Activated CD8-positive, alpha-beta T cell treated with anti-CD3 and anti-CD28 coated beads for 36 hours (primary cell): ENCODE measurements at regions of chr20 and their contacts with region 1.

Region 1: GRCh38 chr20:45971675-45972499 is at the start of gene ZNF335:
- DNase-seq: peak; percentile 95
- ATAC-seq: peak; percentile 86
- H3K4me3 Mint-ChIP-seq: peak within 1 kb of the TSS; percentile 84
- H3K27ac Mint-ChIP-seq: peak within 1 kb of the TSS; percentile 100
- H3K4me1 Mint-ChIP-seq: peaks cover 16% of the 10 kb centered on the region
- H3K27me3 Mint-ChIP-seq: no peaks in the 10 kb centered on the region
- CTCF ChIP-seq: no peak
- total RNA-seq, gene ZNF335: 27.0 to 28.8 TPM

Region 2: GRCh38 chr20:45823949-45824835 is 147.7 kb before region 1 on chr20:
- CTCF ChIA-PET with region 1: interaction called, 12 read pairs
- POLR2A ChIA-PET with region 1: interaction called, 5 read pairs
- intact Hi-C with region 1: no loop called
- DNase-seq: peak; percentile 66
- ATAC-seq: peak; percentile 89
- H3K4me3 Mint-ChIP-seq: peak overlapping the region; percentile 47
- H3K27ac Mint-ChIP-seq: peak overlapping the region; percentile 62
- H3K4me1 Mint-ChIP-seq: peaks cover 12% of the 10 kb centered on the region
- H3K27me3 Mint-ChIP-seq: peaks cover 27% of the 10 kb centered on the region
- CTCF ChIP-seq: peak; percentile 36

Region 3: GRCh38 chr20:45890985-45891983 is 80.6 kb before region 1 on chr20 and contains the starts of genes CTSA and NEURL2:
- CTCF ChIA-PET with region 1: interaction called, 15 read pairs
- POLR2A ChIA-PET with region 1: interaction called, 31 read pairs
- intact Hi-C with region 1: no loop called
- DNase-seq: peak; percentile 95
- ATAC-seq: peak; percentile 70
- H3K4me3 Mint-ChIP-seq: peak within 1 kb of the TSS; percentile 88
- H3K27ac Mint-ChIP-seq: peak within 1 kb of the TSS; percentile 89
- H3K4me1 Mint-ChIP-seq: peaks cover 33% of the 10 kb centered on the region
- H3K27me3 Mint-ChIP-seq: no peaks in the 10 kb centered on the region
- CTCF ChIP-seq: no peak
- total RNA-seq, gene CTSA: 34.5 to 40.2 TPM
- total RNA-seq, gene NEURL2: 2.4 to 2.9 TPM

Region 4: GRCh38 chr20:45946149-45946970 is 25.5 kb before region 1 on chr20:
- CTCF ChIA-PET with region 1: interaction called, 74 read pairs
- POLR2A ChIA-PET with region 1: interaction called, 12 read pairs
- intact Hi-C with region 1: no loop called
- DNase-seq: peak; percentile 60
- ATAC-seq: peak; percentile 52
- H3K4me3 Mint-ChIP-seq: no peak overlapping the region
- H3K27ac Mint-ChIP-seq: peak overlapping the region; percentile 65
- H3K4me1 Mint-ChIP-seq: peaks cover 13% of the 10 kb centered on the region
- H3K27me3 Mint-ChIP-seq: no peaks in the 10 kb centered on the region
- CTCF ChIP-seq: no peak

Region 5: DNA sequence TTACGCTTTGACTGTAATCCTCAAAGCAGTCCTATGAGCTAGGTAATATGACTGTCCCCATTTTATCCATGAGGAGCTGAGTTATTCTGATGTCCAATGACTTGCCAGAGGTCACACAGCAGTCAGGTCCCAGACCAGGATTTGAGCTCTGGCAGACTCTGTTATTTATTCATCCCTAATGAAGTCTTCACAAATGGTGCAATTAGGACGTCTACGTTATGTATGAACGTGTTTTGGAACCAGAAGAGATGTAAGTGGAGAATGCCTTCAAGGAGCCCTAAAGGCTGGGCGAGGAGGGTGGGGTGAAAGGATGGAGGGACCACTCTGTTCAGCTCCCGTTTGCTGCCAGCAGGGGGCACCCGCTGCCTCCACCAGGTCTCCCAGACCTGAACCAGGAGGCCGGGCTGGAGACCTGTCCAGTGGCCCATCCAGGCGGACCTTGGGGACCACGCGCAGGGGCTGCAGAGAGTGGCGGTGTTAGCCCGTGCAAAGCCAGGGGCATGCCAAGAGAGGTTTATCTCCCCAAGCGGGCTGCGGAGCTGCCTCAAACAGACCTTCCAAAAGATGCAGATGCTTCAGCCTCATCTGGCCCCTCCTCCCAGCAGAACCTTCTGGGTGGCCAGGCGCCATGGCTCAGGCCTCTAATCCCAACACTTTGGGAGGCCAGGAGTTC is 15.4 kb after region 1 on chr20:
- CTCF ChIA-PET with region 1: interaction called, 71 read pairs
- POLR2A ChIA-PET with region 1: interaction called, 9 read pairs
- intact Hi-C with region 1: no loop called
- DNase-seq: peak; percentile 89
- ATAC-seq: peak; percentile 99
- H3K4me3 Mint-ChIP-seq: no peak overlapping the region
- H3K27ac Mint-ChIP-seq: no peak overlapping the region
- H3K4me1 Mint-ChIP-seq: peaks cover 3% of the 10 kb centered on the region
- H3K27me3 Mint-ChIP-seq: peaks cover 12% of the 10 kb centered on the region
- CTCF ChIP-seq: peak; percentile 88